Activated CD8-positive, alpha-beta T cell treated with anti-CD3 and anti-CD28 coated beads for 36 hours (primary cell): ENCODE measurements at regions of chrX and their contacts with region 1.

Region 1: DNA sequence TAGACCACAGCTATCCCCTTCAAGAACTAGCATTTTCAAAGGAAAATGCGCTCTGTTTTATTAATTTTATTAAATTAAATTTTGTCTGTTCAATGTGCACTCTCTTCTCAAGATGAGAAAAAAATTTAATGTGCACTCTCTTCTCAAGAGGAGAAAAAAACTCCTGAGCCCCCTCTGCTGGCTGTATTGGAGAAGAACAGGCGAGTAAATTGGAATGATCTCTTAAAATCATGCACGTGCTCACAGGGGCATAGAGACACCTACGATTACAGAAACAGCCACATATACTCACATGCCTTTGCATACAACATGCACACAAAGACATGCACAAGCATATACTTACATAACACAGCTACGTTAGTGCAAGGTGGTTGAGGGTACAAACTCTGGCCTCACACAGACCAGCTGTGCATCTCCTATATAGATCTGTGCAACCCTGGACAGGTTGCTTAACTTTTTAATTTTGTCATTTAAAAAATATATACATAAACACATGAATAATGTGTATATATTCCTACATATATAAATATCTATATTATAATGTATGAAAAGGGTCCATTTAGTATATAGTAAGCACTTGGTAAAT is 176.2 kb upstream of the CXorf66 start:
- DNase-seq: peak; percentile 34
- ATAC-seq: no peak
- H3K4me3 Mint-ChIP-seq: no peak overlapping the region
- H3K27ac Mint-ChIP-seq: no peak overlapping the region
- H3K4me1 Mint-ChIP-seq: no peaks in the 10 kb centered on the region
- H3K27me3 Mint-ChIP-seq: no peaks in the 10 kb centered on the region
- CTCF ChIP-seq: no peak

Region 2: DNA sequence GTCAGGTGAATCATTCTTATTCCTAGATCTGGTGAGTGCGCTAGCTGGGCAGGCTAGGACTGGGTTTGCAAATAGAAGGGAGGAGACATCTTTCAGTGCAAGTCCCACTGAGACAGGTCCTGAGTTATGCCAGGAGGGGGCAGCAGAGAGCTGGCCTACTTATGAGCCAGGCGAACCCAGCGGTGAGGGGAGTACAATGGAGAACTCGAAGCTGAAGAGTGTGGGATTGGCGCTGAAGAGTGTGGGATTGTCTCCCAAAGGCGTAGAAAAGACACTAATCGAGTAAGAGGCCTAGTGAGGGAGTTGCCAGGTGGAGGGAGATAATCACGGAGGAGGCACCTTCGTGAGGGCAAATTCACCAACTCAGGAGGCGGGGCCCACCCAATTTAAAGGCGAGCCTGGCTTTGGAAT is 84.5 kb before region 1 on chrX:
- CTCF ChIA-PET with region 1: interaction called, 10 read pairs
- POLR2A ChIA-PET with region 1: no interaction called
- intact Hi-C with region 1: no loop called
- DNase-seq: peak; percentile 65
- ATAC-seq: peak; percentile 65
- H3K4me3 Mint-ChIP-seq: no peak overlapping the region
- H3K27ac Mint-ChIP-seq: no peak overlapping the region
- H3K4me1 Mint-ChIP-seq: no peaks in the 10 kb centered on the region
- H3K27me3 Mint-ChIP-seq: peaks cover 2% of the 10 kb centered on the region
- CTCF ChIP-seq: peak; percentile 64

Region 3: GRCh38 chrX:140071037-140071436 is 70.5 kb before region 1 on chrX:
- CTCF ChIA-PET with region 1: no interaction called
- POLR2A ChIA-PET with region 1: no interaction called
- intact Hi-C with region 1: loop called (anchors 2 kb)
- DNase-seq: no peak
- ATAC-seq: no peak
- H3K4me3 Mint-ChIP-seq: no peak overlapping the region
- H3K27ac Mint-ChIP-seq: no peak overlapping the region
- H3K4me1 Mint-ChIP-seq: no peaks in the 10 kb centered on the region
- H3K27me3 Mint-ChIP-seq: no peaks in the 10 kb centered on the region
- CTCF ChIP-seq: no peak